AG04449 (cell line): ENCODE measurements at regions of chr2 and their contacts with region 1.

Region 1: GRCh38 chr2:173021939-173022371 is 53.7 kb upstream of the MAP3K20 start:
- DNase-seq: no peak
- H3K4me3 ChIP-seq: no peak overlapping the region
- CTCF ChIP-seq: peak; percentile 23

Region 2: GRCh38 chr2:172806493-172806892 is 215.5 kb before region 1 on chr2:
- CTCF ChIA-PET with region 1: interaction called, 53 read pairs
- POLR2A ChIA-PET with region 1: no interaction called
- DNase-seq: no peak
- H3K4me3 ChIP-seq: no peak overlapping the region
- CTCF ChIP-seq: peak; percentile 64

Region 3: GRCh38 chr2:172813314-172813888 is 208.6 kb before region 1 on chr2:
- CTCF ChIA-PET with region 1: interaction called, 53 read pairs
- POLR2A ChIA-PET with region 1: no interaction called
- DNase-seq: no peak
- H3K4me3 ChIP-seq: no peak overlapping the region
- CTCF ChIP-seq: no peak

Region 4: GRCh38 chr2:172864182-172864581 is 157.8 kb before region 1 on chr2:
- CTCF ChIA-PET with region 1: interaction called, 12 read pairs
- POLR2A ChIA-PET with region 1: no interaction called
- DNase-seq: no peak
- H3K4me3 ChIP-seq: no peak overlapping the region
- CTCF ChIP-seq: peak; percentile 60

Region 5: DNA sequence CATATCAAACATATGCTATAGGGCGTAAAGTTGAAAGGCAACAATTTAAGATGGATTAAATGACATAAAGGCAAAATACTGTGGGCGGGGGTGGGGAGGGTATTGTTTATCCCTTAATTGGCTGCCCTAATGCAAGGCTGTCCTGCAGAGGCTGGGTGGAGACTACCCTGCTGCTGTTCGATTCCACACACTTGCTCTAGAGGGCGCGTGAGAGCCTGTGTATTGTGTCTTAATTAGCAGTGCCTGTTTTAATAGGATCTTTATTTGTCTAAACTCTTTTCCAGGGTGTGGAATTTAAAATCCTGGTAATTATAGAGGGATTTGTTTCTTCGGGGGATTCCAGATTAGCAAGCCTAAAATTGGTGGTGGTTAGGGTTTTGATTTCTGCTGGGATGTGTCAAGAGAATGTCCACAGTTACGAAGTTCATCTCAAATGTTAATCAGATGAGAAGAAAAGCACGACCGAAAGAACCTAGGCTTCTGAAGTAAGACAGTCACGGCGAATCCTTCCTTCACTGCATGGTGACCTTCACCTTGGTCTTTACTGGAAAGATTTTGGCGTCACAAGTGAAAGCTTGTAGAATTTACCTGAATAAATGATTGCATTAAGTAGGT is 49.8 kb before region 1 on chr2:
- CTCF ChIA-PET with region 1: interaction called, 38 read pairs
- POLR2A ChIA-PET with region 1: no interaction called
- DNase-seq: no peak
- H3K4me3 ChIP-seq: no peak overlapping the region
- CTCF ChIP-seq: peak; percentile 85

Region 6: GRCh38 chr2:173002751-173003541 is 19.0 kb before region 1 on chr2:
- CTCF ChIA-PET with region 1: interaction called, 38 read pairs
- POLR2A ChIA-PET with region 1: no interaction called
- DNase-seq: no peak
- H3K4me3 ChIP-seq: no peak overlapping the region
- CTCF ChIP-seq: no peak

Region 7: GRCh38 chr2:173037245-173038120 is 15.5 kb after region 1 on chr2:
- CTCF ChIA-PET with region 1: interaction called, 33 read pairs
- POLR2A ChIA-PET with region 1: no interaction called
- DNase-seq: no peak
- H3K4me3 ChIP-seq: no peak overlapping the region
- CTCF ChIP-seq: no peak